Activated T-helper 2 cell treated with anti-CD3 and anti-CD28 coated beads, Interferon-gamma antibody, Interleukin-2, Interleukin-4, amounts not matched to agents 10 μg/mL and 5 μg/mL and 100 μg/mL, durations not matched to agents 14 hours and 24 hours and 36 hours (primary cell): ENCODE measurements at regions of chr2 and their contacts with region 1.

Region 1: DNA sequence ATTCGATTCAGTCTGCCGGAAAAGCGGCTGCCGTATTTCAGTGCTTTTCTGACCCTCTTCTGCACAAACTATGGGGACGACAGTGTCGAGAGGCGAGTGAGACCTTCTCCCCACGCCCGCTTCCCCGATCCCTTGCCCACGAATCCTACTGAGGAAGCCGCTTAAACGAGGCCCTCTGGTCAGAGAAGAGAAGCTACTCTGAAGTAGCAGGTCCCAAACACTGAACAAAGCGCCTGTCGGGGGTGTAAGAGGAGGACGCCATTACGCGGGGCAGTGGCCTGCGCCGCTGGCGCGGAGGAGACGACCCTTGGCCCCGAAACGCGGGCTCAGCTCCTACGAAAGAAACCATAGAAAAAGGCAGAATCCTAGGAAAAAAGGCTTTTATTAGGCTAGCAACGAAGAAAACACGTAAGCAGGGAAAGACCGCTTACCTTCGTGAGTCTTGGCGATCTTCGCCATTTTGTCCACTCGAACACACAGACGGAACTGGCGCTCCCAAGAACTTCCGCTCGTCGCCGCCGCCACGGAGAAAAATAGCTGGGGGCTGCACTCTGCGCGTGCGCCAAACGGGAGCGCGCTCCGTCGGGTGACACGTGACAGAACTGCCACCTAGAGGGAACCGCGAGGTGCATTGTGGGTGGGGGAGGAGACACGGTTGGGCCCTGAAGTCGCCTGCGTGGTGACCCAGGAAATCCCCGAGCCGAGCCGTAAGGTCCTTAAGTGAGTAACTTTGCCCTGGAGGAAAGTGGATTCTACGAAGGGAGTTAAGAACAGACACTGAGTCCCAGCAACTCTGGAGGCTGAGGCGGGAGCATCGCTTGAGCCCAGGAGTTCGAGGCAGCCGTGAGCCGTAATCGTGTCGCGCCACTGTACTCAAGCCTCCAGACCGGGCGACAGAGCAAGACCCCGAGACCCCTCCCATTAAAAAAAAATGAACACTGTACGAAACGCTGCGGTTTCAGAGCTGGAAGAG is at the start of gene SF3B1:
- DNase-seq: peak; percentile 99
- H3K4me3 Mint-ChIP-seq: peak within 1 kb of the TSS; percentile 89
- H3K27ac Mint-ChIP-seq: peak within 1 kb of the TSS; percentile 100
- H3K4me1 Mint-ChIP-seq: peaks cover 42% of the 10 kb centered on the region
- H3K27me3 Mint-ChIP-seq: no peaks in the 10 kb centered on the region
- total RNA-seq, gene SF3B1: 284 and 289 TPM in 2 replicates

Region 2: GRCh38 chr2:195656859-195657633 is 1777.8 kb before region 1 on chr2 and contains the start of gene SLC39A10:
- intact Hi-C with region 1: loop called (anchors 10 kb)
- DNase-seq: peak; percentile 97
- H3K4me3 Mint-ChIP-seq: peak within 1 kb of the TSS; percentile 94
- H3K27ac Mint-ChIP-seq: peak within 1 kb of the TSS; percentile 100
- H3K4me1 Mint-ChIP-seq: peaks cover 25% of the 10 kb centered on the region
- H3K27me3 Mint-ChIP-seq: no peaks in the 10 kb centered on the region
- total RNA-seq, gene SLC39A10: 27.2 and 27.6 TPM in 2 replicates

Region 3: DNA sequence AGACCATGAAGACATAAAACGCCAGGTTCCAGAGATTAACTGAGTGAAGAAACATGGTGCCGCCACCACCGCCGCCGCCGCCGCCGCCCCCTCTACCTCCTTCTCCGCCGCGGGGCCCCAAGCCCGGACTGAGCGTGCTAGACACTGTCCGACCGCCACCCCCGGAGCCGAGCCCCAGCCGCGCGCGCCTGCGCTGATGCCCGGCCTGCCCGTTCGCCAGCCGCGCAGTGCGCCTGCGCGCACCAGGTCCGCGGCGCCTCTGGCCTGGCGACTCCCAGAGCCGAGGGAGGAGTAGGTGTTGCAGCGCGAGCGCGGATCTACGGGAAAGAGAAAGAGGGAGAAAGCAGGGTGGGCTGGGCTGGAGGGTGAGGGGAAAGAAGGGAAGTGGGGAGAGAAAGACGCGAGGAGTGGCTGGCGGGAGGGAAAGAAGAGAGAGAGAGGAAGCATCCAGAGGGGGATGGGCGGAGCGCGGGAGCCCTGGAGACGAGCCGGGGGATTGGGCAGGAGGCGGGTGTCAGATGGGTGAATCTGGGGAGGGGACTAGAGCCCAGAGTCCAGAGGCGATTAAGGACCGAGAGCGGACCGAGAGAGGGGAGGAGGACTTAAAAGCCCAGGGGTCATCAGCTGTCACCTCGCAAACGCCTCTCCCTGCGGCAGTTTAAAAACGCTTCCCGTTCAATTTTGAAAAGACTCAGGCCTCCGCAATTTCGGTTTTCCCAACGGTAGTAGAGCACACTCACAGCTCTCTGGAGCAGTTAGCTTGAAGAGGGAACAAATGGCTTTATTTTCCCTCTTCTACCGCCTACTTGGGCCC is 508.1 kb before region 1 on chr2 and contains the start of gene PGAP1:
- intact Hi-C with region 1: loop called (anchors 10 kb)
- DNase-seq: peak; percentile 84
- H3K4me3 Mint-ChIP-seq: peak within 1 kb of the TSS; percentile 100
- H3K27ac Mint-ChIP-seq: peak within 1 kb of the TSS; percentile 99
- H3K4me1 Mint-ChIP-seq: peaks cover 35% of the 10 kb centered on the region
- H3K27me3 Mint-ChIP-seq: no peaks in the 10 kb centered on the region
- total RNA-seq, gene PGAP1: 31.2 and 31.4 TPM in 2 replicates

Region 4: GRCh38 chr2:197198890-197199289 is 235.9 kb before region 1 on chr2:
- intact Hi-C with region 1: loop called (anchors 5 kb)
- DNase-seq: peak; percentile 89
- H3K4me3 Mint-ChIP-seq: peak overlapping the region; percentile 86
- H3K27ac Mint-ChIP-seq: peak overlapping the region; percentile 95
- H3K4me1 Mint-ChIP-seq: peaks cover 80% of the 10 kb centered on the region
- H3K27me3 Mint-ChIP-seq: no peaks in the 10 kb centered on the region

Region 5: GRCh38 chr2:197405582-197405981 is 29.2 kb before region 1 on chr2:
- intact Hi-C with region 1: no loop called
- DNase-seq: no peak
- H3K4me3 Mint-ChIP-seq: no peak overlapping the region
- H3K27ac Mint-ChIP-seq: no peak overlapping the region
- H3K4me1 Mint-ChIP-seq: no peaks in the 10 kb centered on the region
- H3K27me3 Mint-ChIP-seq: no peaks in the 10 kb centered on the region

Region 6: DNA sequence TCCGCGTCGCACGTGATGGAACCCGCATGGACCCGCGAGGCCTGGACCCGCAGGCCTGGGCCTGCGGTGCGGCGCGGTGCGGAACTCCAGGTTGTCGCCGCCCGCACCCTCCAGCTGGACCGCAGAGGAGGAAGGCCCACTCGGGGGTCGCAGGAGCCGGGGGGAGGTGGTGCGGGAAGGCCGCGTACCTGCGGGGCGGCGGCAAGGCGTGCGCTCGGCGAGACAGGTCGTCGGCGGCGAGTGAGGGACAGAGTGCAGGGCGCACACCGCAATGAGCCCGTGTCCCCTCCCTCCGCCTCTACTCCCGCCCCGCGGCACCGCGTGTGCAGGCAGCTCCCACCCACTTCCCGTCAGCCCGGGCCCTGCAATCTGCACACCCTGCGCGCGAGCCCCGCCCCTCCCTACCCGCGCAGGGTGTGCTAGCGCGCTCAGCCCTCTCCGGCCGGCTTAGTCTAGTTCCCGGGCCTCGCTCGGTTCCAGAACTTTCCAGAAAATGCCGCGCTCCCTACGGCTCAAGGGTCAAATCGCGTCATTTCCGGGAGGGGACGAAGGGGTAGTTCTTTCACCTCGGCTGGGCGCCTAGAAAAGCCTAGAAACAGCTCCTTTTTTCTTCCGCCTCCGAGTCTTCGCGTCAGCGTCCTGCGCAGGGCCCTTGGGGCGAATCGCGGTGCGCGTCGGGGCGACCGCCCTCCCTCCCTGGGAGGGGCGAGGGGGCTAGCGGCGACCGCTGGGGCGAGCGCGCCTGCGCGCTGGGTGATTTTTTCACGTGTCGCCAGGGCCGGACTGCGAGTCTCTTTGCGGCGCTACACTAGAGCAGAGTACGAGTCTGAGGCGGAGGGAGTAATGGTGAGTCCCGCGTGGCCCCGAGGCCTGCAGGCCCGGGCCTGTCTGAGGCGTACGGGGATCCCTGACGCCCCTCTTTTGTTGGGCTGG is 65.0 kb after region 1 on chr2 and contains the starts of genes HSPD1 and HSPE1:
- intact Hi-C with region 1: loop called (anchors 1 kb)
- DNase-seq: peak; percentile 99
- H3K4me3 Mint-ChIP-seq: peak within 1 kb of the TSS; percentile 94
- H3K27ac Mint-ChIP-seq: peak within 1 kb of the TSS; percentile 97
- H3K4me1 Mint-ChIP-seq: peaks cover 41% of the 10 kb centered on the region
- H3K27me3 Mint-ChIP-seq: no peaks in the 10 kb centered on the region
- total RNA-seq, gene HSPD1: 749 and 761 TPM in 2 replicates
- total RNA-seq, gene HSPE1: 301 and 309 TPM in 2 replicates

Region 7: GRCh38 chr2:197705121-197705911 is 270.5 kb after region 1 on chr2 and contains the start of gene MARS2:
- intact Hi-C with region 1: loop called (anchors 5 kb)
- DNase-seq: peak; percentile 90
- H3K4me3 Mint-ChIP-seq: peak within 1 kb of the TSS; percentile 92
- H3K27ac Mint-ChIP-seq: peak within 1 kb of the TSS; percentile 85
- H3K4me1 Mint-ChIP-seq: peaks cover 49% of the 10 kb centered on the region
- H3K27me3 Mint-ChIP-seq: no peaks in the 10 kb centered on the region
- total RNA-seq, gene MARS2: 16.8 and 17.2 TPM in 2 replicates